ENCODE measurements at regions of chr18 and their contacts with region 1.

Region 1: GRCh38 chr18:11149441-11150270 is at the start of gene PIEZO2:
- DNase-seq: peak; percentile 65
- ATAC-seq: peak; percentile 72
- total RNA-seq, gene PIEZO2: 0.32 TPM

Region 2: GRCh38 chr18:10560450-10561045 is 589.1 kb before region 1 on chr18:
- intact Hi-C with region 1: loop called (anchors 10 kb)
- DNase-seq: peak; percentile 65
- ATAC-seq: peak; percentile 86

Region 3: DNA sequence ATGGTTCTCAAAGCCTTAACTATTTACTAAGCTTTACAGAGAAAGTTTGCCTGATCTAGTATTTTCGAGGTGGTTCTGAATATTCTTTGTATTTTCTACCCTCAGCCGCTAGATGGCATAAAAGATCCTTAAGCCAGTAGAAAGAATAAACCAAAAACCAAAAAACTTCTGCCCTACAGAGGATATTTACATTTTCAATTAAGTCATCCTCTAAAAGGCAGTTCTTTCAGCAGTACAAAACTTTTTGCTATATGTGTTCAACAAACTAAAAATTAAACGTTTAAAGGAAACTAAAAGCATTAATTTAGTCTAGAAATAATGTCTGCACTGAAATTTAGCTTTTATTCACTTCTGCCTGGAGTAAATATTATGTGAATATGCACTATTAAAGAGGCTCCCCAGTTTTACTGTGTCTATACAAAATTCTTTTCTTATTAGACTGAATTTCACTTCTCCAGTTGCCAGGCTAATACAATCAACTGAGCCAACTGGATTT is 297.8 kb before region 1 on chr18:
- intact Hi-C with region 1: loop called (anchors 5 kb)
- DNase-seq: no peak
- ATAC-seq: peak; percentile 49

Region 4: DNA sequence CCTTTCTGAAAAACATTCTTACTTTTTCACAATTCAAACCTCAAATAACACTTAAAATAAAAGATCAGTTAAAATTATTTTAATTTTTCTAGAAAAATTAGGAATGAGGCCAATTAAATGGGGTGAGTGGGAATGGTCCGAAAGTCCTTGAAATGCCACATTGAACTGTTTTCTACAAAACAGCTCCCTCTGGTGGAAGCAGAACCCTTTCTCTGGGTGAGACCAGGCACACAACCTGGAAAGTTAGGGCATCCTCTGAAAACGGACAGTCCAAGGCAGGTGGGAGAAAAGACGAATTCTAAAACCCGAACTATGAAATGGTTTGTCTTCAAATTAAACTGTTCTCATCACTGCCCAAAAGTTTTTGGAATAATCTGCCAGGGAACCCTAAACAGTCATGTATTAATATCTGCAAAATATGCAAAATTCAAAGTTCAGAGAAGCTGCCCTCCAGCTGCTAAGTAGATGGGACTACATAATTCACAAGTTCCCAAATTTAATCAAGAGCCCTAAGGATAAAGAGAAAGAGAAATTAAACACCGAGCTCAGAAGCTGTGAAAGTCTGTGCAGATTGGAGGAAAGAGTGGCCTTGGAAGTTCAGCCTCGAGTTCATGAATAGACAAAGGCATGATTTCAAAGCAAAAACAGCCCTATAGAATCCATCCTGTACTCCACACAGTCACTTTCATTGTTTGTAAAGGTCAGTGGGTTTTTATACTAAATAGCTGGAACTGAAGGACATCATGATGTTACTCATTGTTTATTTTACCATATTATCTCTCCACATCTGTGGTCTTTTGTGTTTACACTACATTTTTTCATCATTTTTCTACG is 108.6 kb before region 1 on chr18:
- intact Hi-C with region 1: loop called (anchors 10 kb)
- DNase-seq: no peak
- ATAC-seq: peak; percentile 59

Measured in Right ventricle myocardium superior (tissue), 1 donor.